ENCODE measurements at regions of chr10 and their contacts with region 1.

Region 1: DNA sequence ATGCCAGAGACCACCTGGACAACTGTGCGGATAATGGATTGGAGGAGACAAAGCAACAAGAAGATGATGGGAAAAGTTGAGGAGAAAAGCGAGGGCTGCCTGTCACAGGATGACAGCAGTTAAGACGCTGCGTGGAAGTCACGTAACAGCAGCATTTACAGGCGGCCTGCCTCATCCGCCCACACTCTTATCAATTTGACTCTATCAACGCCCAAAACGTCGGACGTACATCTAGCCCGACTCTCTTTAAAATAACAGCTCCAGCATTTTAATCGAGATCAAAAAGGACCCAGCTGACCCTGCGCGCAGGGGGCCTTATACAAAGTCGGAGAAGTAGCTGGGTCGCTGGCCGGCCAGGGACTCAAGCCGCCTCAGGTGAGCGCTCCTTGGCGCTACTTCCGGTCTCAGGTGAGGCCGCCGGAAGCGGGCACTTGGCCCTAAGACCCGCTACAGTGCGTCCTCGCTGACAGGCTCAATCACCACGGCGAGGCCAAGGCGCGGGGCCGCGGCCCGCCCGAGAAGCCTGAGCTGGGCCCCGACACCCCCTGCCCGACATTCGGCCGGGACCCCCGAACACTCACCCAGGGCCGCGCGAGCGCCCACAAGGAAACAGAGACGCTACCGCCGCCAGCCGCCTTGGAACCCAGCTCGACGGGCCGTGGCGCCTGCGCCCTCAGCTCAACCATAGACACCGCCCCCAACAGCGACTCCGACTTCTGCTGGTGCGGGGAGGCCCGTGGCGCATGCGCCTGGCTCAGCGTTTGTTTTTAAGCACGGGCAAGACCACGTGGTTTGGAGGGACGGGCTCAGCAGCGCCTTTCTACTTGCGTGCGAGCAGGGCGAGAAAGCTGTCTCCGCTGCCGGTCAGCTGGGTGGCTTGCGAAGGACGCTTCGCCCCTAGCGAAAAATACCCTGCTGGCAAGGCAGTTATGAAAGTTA is at the start of gene ERCC6:
- DNase-seq: peak; percentile 96 to 98 (median 97)
- H3K4me3 ChIP-seq: peak within 1 kb of the TSS; percentile 71 to 99 (median 93)
- H3K27ac ChIP-seq: peak within 1 kb of the TSS in 56 of 59 donors; percentile 28 to 94 (median 79)
- H3K27me3 ChIP-seq: no peaks in the 10 kb centered on the region
- CTCF ChIP-seq: peak in 54 of 56 donors; percentile 15 to 74 (median 49)
- total RNA-seq, gene ERCC6: 22.7 to 64.4 (median 38.8) TPM

Region 2: GRCh38 chr10:49177391-49178355 is 361.0 kb before region 1 on chr10:
- intact Hi-C with region 1: loop called in 1 of 2 experiments (anchors 10 kb)
- DNase-seq: peak in 5 of 10 donors; percentile 49 to 72 (median 61)
- H3K4me3 ChIP-seq: no peak overlapping the region
- H3K27ac ChIP-seq: peak overlapping the region in 51 of 59 donors; percentile 8 to 86 (median 68)
- H3K27me3 ChIP-seq: no peaks in the 10 kb centered on the region
- CTCF ChIP-seq: no peak

Region 3: GRCh38 chr10:49272251-49273081 is 266.2 kb before region 1 on chr10:
- intact Hi-C with region 1: no loop called
- DNase-seq: no peak
- H3K4me3 ChIP-seq: no peak overlapping the region
- H3K27ac ChIP-seq: peak overlapping the region in 1 of 59 donors; percentile 24
- H3K27me3 ChIP-seq: no peaks in the 10 kb centered on the region
- CTCF ChIP-seq: no peak

Measured in dorsolateral prefrontal cortex (tissue), 120 donors.